GM12878 (cell line): ENCODE measurements at regions of chr2 and their contacts with region 1.

Region 1: GRCh38 chr2:187842978-187843847 is 289.0 kb upstream of the TFPI start:
- DNase-seq: no peak
- ATAC-seq: peak; percentile 79
- H3K4me3 ChIP-seq: no peak overlapping the region
- H3K27ac ChIP-seq: no peak overlapping the region
- H3K4me1 ChIP-seq: no peaks in the 10 kb centered on the region
- H3K27me3 ChIP-seq: no peaks in the 10 kb centered on the region
- CTCF ChIP-seq: peak; percentile 48 to 64 (median 51); a peak in 5 of 6 replicates
- EP300 ChIP-seq: no peak
- POLR2A ChIP-seq: no peak
- RAD21 ChIP-seq: peak; percentile 64

Region 2: GRCh38 chr2:187862715-187863114 is 19.5 kb after region 1 on chr2:
- CTCF ChIA-PET with region 1: interaction called, 13 read pairs
- POLR2A ChIA-PET with region 1: no interaction called
- RAD21 ChIA-PET with region 1: no interaction called
- SMC1A ChIA-PET with region 1: no interaction called
- in situ Hi-C with region 1: no loop called
- intact Hi-C with region 1: no loop called
- DNase-seq: no peak
- ATAC-seq: no peak
- H3K4me3 ChIP-seq: no peak overlapping the region
- H3K27ac ChIP-seq: no peak overlapping the region
- H3K4me1 ChIP-seq: no peaks in the 10 kb centered on the region
- H3K27me3 ChIP-seq: no peaks in the 10 kb centered on the region; a peak in 1 of 4 replicates
- CTCF ChIP-seq: no peak
- EP300 ChIP-seq: no peak
- POLR2A ChIP-seq: no peak
- RAD21 ChIP-seq: no peak